ENCODE measurements at regions of chr2 and their contacts with region 1.

Region 1: DNA sequence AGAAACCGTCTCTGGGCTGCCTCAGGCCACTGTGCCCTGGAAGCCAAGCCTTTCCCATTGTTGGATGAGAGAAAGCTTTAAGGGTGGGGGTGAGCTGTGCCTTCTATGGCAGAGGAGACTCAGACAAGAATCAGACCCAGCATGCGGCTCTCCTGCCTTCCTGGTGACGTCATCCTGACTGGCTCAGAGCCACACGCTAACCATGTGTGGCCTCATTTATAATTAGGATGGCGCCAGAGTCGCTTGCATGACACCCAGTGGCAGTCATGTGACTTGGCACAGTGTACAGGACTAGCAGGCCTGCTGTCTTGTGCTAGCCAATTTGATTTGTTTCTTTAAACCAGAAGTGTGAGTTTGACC is 99.2 kb downstream of the SH3BP4 start:
- DNase-seq: peak; percentile 95
- H3K4me3 Mint-ChIP-seq: no peak overlapping the region
- H3K27ac Mint-ChIP-seq: peak overlapping the region; percentile 3
- H3K4me1 Mint-ChIP-seq: peaks cover 32% of the 10 kb centered on the region
- H3K27me3 Mint-ChIP-seq: no peaks in the 10 kb centered on the region
- CTCF ChIP-seq: peak; percentile 7

Region 2: GRCh38 chr2:234550511-234551107 is 500.4 kb before region 1 on chr2:
- CTCF ChIA-PET with region 1: interaction called, 5 read pairs
- POLR2A ChIA-PET with region 1: no interaction called
- intact Hi-C with region 1: loop called (anchors 1 kb)
- DNase-seq: peak; percentile 77
- H3K4me3 Mint-ChIP-seq: no peak overlapping the region
- H3K27ac Mint-ChIP-seq: no peak overlapping the region
- H3K4me1 Mint-ChIP-seq: peaks cover 5% of the 10 kb centered on the region
- H3K27me3 Mint-ChIP-seq: no peaks in the 10 kb centered on the region
- CTCF ChIP-seq: peak; percentile 90

Region 3: GRCh38 chr2:234564699-234565098 is 486.3 kb before region 1 on chr2:
- CTCF ChIA-PET with region 1: interaction called, 3 read pairs
- POLR2A ChIA-PET with region 1: no interaction called
- intact Hi-C with region 1: loop called (anchors 1 kb)
- DNase-seq: no peak
- H3K4me3 Mint-ChIP-seq: no peak overlapping the region
- H3K27ac Mint-ChIP-seq: no peak overlapping the region
- H3K4me1 Mint-ChIP-seq: no peaks in the 10 kb centered on the region
- H3K27me3 Mint-ChIP-seq: no peaks in the 10 kb centered on the region
- CTCF ChIP-seq: no peak

Region 4: GRCh38 chr2:234974501-234975385 is 76.2 kb before region 1 on chr2:
- CTCF ChIA-PET with region 1: no interaction called
- POLR2A ChIA-PET with region 1: no interaction called
- intact Hi-C with region 1: no loop called
- DNase-seq: no peak
- H3K4me3 Mint-ChIP-seq: no peak overlapping the region
- H3K27ac Mint-ChIP-seq: no peak overlapping the region
- H3K4me1 Mint-ChIP-seq: peaks cover 39% of the 10 kb centered on the region
- H3K27me3 Mint-ChIP-seq: no peaks in the 10 kb centered on the region
- CTCF ChIP-seq: no peak

Region 5: DNA sequence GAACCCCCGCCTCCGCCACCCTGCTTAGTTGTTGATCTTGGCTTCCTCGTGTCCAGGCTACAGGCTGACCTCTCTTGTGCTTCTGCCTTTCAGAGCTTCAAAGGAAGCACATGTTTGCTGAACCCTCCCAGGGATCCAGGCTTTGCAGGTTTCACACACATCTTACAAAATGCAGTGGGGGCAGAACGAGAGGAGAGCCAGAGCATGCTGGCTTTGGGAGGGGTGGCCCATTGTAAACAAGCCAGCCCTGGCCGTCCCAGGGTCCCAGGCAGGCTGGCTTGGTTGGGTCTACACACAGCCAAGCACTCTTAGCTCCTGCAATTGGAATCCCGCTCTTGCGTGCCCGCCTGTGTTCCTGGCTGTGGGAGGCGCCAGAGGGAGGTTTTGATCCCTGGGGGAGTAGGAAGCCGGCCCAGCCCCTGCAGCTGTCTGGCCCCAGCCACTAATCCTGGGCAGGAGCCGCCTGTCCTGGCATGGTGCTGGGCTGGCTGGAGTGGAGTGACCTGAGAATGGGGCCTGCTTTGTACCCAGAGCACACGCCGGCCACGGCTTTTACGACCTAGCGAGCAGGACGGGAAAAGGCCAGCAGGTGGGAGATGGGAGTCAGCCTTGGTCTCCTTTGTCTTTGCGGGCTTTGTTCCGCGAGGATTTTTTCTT is 45.2 kb before region 1 on chr2:
- CTCF ChIA-PET with region 1: no interaction called
- POLR2A ChIA-PET with region 1: no interaction called
- intact Hi-C with region 1: no loop called
- DNase-seq: no peak
- H3K4me3 Mint-ChIP-seq: no peak overlapping the region
- H3K27ac Mint-ChIP-seq: peak overlapping the region; percentile 35
- H3K4me1 Mint-ChIP-seq: peaks cover 25% of the 10 kb centered on the region
- H3K27me3 Mint-ChIP-seq: no peaks in the 10 kb centered on the region
- CTCF ChIP-seq: no peak

Measured in MCF 10A (cell line).